ENCODE measurements at regions of chr3 and their contacts with region 1.

Region 1: GRCh38 chr3:188348435-188349244 is 194.7 kb downstream of the LPP start:
- DNase-seq: no peak

Region 2: DNA sequence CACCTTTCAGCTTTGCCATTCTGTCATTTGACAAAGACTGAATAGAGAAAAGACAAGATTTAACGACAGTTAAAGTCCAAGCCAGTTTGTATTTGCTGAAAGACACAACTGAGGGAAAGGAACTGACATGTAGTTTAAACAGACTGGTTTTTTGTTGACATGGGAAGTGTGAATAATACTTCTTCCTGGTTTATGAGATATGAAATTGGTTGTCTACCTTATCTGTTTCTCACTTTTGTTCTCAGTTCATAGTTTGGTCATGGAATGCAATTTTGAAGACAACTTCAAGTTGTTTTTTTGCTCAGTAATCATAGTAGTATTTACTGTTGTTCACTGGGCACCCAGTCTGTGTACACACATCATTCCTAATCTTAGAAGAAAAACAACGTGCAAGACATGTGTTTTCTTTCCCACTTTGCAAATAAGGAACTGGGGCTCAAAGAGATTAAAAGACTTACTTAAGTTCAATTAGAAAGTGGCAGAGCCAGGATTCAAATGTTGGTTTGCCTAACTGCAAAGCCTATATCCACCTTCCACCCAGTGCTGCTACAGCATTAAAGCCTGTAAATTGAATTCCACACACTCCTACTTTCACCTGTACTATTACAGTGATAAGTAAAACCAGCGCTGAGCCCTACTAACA is 91.1 kb before region 1 on chr3:
- intact Hi-C with region 1: no loop called
- DNase-seq: no peak

Region 3: GRCh38 chr3:188294823-188295487 is 53.7 kb before region 1 on chr3:
- intact Hi-C with region 1: loop called (anchors 5 kb)
- DNase-seq: no peak

Region 4: DNA sequence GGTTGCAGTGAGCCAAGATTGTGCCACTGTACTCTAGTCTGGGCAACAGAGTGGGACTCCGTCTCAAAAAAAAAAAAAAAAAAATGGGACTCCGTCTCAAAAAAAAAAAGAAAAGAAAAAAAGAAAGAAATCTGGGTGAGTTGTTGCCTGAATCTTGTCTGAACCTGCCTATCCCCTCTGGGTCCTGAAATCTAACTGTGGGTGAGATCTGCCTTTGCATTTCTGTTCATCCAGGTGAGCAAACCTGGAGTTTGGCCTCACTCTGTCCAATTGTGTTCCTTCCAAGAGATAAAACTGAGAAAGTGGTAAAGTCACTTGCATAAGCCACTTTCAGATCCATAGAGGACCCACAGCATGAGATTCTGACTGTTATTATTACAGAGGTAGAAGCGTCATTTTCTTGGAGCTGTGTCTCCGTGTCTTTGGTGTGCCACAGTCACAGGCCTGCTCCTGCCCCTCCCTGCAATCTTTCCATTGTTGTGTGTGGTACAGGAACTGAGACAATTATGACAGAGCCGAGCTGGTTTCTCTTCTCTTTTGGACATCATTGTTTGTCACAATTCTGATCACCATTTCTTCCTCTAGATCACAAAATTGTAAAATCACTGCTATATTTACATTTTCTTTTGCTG is 41.2 kb after region 1 on chr3:
- intact Hi-C with region 1: loop called (anchors 5 kb)
- DNase-seq: peak; percentile 78

Region 5: DNA sequence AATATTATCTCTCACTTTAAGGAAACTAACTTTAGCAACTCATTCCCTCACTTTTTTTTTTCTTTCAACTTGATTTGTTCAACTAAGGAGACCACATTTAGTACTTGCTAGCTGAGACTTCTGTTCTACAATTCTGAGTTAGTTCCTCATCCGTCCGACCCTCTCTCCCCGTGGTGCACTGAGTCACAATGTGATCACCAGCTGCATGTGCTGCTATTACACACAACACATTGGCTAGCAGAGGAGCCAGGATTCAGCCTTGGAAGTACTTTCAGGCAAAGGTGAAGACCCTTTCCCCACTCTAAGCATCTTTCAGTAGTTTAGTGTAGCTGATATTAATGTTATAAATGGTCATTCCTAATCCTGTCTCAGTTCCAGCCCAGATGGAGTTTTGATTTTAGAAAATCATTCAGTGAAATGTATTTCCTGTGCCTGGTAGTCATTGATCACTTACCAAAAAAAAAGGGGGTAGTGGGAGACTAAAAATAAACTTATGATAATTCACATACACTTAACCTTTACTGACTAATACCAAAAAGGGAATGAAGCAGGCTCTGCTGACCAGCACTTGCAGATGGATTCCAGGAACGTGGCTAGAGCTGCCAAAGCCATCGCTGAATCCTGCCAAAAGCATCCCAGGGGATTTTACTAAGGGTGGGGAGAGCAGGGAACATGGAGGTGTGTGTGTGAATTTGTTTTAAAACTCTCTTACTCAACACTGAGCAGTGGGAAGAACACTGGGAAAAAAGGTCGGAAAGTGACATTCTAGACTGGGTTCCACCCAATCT is 230.1 kb after region 1 on chr3:
- intact Hi-C with region 1: loop called (anchors 5 kb)
- DNase-seq: peak; percentile 81

Region 6: GRCh38 chr3:188947401-188948280 is 599.0 kb after region 1 on chr3:
- intact Hi-C with region 1: loop called (anchors 5 kb)
- DNase-seq: peak; percentile 93